Mammary epithelial cell (primary cell): ENCODE measurements at regions of chr7 and their contacts with region 1.

Region 1: GRCh38 chr7:1951159-1951536 is 281.1 kb downstream of the ELFN1 start:
- DNase-seq: no peak
- H3K4me3 ChIP-seq: no peak overlapping the region
- H3K27ac ChIP-seq: no peak overlapping the region
- H3K4me1 ChIP-seq: no peaks in the 10 kb centered on the region
- H3K27me3 ChIP-seq: no peaks in the 10 kb centered on the region
- CTCF ChIP-seq: no peak

Region 2: DNA sequence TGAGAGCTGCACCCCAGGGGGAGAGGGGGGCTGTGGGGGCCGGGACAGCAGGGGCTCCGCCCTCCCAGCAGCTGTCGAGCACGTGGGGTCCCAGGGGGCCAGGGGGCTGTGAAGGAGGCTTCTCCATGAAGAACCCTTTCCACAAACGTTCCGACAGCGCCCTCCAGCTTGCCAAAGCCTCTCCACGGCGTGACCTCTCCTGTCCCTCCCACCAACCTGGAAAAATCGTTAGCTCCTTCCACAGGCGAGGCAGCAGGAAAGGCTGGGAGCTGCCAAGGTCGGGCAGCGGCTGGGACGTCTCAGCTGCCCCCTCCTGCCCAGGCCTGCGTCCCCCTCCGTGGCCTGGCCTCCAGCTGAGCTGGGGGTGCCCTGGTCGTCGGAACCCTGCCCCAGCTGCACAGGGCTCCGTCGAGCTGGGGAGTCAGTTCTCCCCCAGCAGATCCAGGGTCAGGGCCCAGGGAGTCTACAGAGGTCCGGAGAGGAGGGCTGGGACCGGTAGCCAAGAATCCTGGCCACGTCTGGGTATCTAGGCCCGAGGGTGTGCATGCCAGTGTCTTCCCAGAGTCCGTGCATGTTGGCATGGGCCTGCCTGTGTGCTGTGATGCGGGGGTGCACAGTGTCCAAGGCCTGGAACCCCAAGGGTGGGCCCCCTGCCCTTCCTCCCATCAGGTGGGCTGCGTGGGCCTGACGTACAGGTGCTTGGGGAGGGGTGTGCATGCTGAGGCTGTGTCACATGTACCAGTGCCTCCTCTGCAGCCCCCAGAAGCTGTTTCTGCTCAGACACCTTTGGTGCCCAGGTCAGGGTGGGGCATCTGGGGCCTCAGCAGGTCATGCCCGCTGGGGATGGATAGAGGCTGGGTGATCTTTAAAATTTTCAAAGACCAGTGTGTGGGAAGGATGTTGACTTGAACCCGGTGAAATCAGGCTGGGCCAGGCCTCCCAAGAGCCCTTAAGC is 651.9 kb before region 1 on chr7:
- CTCF ChIA-PET with region 1: interaction called, 11 read pairs
- dilution Hi-C with region 1: no loop called
- in situ Hi-C with region 1: no loop called
- intact Hi-C with region 1: no loop called
- DNase-seq: no peak
- H3K4me3 ChIP-seq: no peak overlapping the region
- H3K27ac ChIP-seq: no peak overlapping the region
- H3K4me1 ChIP-seq: peaks cover 7% of the 10 kb centered on the region
- H3K27me3 ChIP-seq: peaks cover 22% of the 10 kb centered on the region
- CTCF ChIP-seq: no peak

Region 3: DNA sequence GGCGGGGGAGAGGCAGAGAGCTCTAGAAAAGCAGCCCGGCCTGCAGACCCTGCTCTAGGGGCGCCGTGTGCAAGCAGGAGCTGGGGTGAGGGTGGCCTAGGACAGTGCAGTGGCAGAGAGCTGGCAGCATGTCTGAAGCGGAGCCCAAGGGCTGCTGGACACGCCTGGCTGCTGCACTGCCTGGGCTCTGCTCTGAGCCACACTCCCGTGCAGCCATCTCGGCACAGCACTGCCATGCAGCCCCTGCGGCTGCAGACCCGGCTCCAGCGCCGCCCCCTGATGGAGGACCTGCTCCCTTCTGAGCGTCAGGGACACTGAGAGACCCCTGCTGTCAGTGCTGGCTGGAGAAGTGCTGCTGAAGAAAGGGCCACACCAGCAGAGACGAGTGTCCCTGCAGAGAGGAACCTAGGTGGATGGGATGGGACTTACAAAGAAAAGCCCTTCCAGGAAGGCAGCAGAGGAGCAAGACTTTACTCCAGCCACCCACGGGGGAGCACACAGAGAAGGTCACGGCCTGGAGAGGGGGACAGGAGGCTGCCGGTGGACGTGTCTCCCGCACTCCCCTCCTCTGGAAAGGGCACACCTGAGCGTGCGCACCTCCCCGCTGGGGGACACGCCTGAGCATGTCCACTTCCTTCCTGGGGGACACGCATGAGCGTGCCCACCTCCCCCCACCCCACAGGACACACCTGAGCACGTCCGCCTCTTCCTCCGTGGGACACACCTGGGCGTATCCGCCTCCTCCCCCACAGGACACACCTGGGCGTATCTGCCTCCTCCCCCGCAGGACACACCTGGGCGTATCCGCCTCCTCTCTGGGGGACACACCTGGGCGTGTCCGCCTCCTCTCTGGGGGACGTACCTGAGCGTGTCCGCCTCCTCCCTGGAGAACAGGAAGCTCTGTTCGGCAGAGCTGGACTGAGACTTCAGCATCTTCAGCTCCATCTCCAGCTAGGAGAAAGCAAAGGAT is 28.7 kb after region 1 on chr7:
- CTCF ChIA-PET with region 1: no interaction called
- dilution Hi-C with region 1: no loop called
- in situ Hi-C with region 1: no loop called
- intact Hi-C with region 1: no loop called
- DNase-seq: no peak
- H3K4me3 ChIP-seq: no peak overlapping the region
- H3K27ac ChIP-seq: no peak overlapping the region
- H3K4me1 ChIP-seq: peaks cover 7% of the 10 kb centered on the region
- H3K27me3 ChIP-seq: no peaks in the 10 kb centered on the region
- CTCF ChIP-seq: no peak